Pancreas (tissue), 10 donors: ENCODE measurements at regions of chr4 and their contacts with region 1.

Region 1: DNA sequence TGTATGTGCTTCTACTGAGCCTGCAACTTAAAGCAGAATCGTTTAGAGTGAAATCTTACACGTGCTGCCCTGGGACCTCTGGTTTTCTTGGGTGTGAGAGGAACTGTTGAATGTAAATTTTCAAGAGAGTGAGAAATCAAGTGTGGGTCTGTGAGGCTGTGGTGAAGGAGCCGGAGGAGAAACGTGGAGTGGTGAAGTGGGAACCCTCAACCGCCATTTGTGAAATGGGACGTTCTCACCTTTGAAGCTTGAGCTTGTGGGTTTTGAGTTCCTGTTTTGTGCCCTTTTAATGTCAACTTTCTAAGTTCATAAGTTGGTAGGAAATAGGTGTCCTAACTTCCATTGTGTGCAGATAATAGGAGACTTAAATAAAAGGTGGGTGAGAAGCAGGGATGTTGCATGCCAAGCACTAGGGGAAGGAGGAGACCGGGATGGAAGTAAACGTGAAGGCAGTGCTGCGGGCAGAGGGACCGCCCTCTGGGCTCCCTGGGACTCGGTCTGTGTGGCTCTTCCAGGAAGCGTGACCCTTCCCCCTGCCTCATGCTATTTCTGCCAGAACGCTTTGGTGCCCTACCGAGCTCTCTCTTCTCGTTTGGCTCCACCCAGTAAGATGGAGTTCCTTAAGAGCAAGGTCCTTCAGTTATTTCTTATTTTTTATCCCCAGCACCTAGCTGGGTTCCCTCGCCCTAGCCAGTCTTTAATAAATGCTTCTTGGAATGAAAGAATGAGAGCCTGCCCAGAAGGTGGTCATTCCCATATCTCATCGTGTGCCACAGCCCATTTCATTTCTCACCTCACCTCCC is 56.0 kb downstream of the TMEM131L start:
- DNase-seq: no peak
- ATAC-seq: no peak
- H3K4me3 ChIP-seq: no peak overlapping the region
- H3K27ac ChIP-seq: peak overlapping the region in 1 of 4 donors; percentile 60
- H3K4me1 ChIP-seq: peaks cover 42 to 60% (median 45%) of the 10 kb centered on the region in 3 donors
- H3K27me3 ChIP-seq: no peaks in the 10 kb centered on the region
- CTCF ChIP-seq: no peak

Region 2: DNA sequence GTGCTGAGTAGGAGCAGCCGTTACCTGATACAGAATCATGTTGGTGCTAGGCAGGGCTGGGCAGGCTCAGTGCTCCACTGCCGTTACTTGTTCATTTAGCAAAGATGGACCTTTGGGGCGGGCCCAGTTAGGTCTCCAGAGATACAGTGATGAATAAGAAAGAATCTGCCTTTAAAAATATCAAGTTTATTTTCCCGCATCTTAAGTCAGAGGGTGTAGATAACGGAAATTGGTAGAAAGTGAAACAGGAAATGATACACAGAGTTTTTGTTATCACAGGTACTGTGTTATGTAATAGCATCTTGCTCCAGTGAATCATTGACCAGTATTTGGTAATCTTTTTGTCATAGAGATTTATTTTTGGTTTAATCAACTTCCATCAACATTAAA is 50.5 kb before region 1 on chr4:
- intact Hi-C with region 1: loop called in 1 of 3 experiments (anchors 10 kb)
- DNase-seq: no peak
- ATAC-seq: peak; percentile 29 to 47 (median 33)
- H3K4me3 ChIP-seq: peak overlapping the region in 1 of 4 donors; percentile 17
- H3K27ac ChIP-seq: peak overlapping the region in 3 of 4 donors; percentile 2 to 60 (median 57)
- H3K4me1 ChIP-seq: peaks cover 12 to 43% (median 17%) of the 10 kb centered on the region in 3 donors
- H3K27me3 ChIP-seq: no peaks in the 10 kb centered on the region
- CTCF ChIP-seq: no peak

Region 3: GRCh38 chr4:153634738-153635353 is 112.6 kb after region 1 on chr4:
- intact Hi-C with region 1: no loop called
- DNase-seq: no peak
- ATAC-seq: peak in 3 of 4 donors; percentile 35 to 75 (median 71)
- H3K4me3 ChIP-seq: no peak overlapping the region
- H3K27ac ChIP-seq: no peak overlapping the region
- H3K4me1 ChIP-seq: no peaks in the 10 kb centered on the region
- H3K27me3 ChIP-seq: no peaks in the 10 kb centered on the region
- CTCF ChIP-seq: peak in 3 of 4 donors; percentile 19 to 32 (median 26)